ENCODE measurements at regions of chr17 and their contacts with region 1.

Region 1: DNA sequence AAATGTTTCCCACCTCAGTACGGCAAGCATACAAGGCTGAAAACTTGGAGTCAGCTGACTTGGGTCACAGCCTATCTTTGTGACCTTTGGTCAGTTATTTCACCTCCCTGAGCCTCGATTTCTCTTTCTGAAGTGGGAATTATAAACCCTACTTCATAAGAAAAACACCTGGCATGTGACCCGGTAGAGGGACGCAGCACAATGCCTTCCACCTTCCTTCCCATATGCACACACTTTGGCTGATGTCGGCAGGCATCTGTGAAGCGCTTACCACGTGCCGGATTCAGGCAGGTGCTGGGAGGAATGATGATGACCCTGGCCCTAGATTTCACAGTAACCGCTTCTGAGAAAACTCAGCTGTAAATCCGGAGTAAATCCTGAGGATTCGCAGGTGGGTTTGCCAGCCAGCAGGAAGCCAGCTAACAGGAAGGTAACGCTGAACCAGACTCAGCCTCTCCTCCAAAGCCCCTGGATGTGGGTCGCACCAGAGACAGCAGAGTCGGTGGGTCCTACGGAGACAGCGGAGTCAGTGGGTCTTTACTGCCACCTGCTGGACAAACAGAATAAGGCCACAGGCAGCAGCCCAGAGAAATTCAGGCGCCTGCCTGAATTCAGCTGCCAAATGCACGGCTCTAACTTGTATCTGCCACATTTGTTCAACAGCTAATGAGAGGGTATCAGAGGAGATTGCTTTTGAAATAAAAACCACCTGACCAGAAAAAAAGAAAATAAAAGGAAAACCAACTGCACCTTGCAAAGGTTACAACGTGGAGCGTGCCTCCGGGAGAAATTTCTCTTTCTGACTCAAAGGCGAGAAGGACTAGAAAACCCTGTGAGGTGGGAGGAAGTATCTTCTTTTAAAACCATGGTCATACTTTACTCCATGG is 16.6 kb downstream of the COPRS start:
- DNase-seq: peak; percentile 76
- ATAC-seq: peak; percentile 90
- H3K4me3 Mint-ChIP-seq: no peak overlapping the region
- H3K27ac Mint-ChIP-seq: no peak overlapping the region
- H3K4me1 Mint-ChIP-seq: no peaks in the 10 kb centered on the region
- H3K27me3 Mint-ChIP-seq: peaks cover 17% of the 10 kb centered on the region

Region 2: GRCh38 chr17:31533546-31534155 is 308.8 kb before region 1 on chr17:
- CTCF ChIA-PET with region 1: interaction called, 41 read pairs
- POLR2A ChIA-PET with region 1: no interaction called
- DNase-seq: no peak
- ATAC-seq: peak; percentile 20
- H3K4me3 Mint-ChIP-seq: no peak overlapping the region
- H3K27ac Mint-ChIP-seq: no peak overlapping the region
- H3K4me1 Mint-ChIP-seq: peaks cover 17% of the 10 kb centered on the region
- H3K27me3 Mint-ChIP-seq: no peaks in the 10 kb centered on the region

Region 3: DNA sequence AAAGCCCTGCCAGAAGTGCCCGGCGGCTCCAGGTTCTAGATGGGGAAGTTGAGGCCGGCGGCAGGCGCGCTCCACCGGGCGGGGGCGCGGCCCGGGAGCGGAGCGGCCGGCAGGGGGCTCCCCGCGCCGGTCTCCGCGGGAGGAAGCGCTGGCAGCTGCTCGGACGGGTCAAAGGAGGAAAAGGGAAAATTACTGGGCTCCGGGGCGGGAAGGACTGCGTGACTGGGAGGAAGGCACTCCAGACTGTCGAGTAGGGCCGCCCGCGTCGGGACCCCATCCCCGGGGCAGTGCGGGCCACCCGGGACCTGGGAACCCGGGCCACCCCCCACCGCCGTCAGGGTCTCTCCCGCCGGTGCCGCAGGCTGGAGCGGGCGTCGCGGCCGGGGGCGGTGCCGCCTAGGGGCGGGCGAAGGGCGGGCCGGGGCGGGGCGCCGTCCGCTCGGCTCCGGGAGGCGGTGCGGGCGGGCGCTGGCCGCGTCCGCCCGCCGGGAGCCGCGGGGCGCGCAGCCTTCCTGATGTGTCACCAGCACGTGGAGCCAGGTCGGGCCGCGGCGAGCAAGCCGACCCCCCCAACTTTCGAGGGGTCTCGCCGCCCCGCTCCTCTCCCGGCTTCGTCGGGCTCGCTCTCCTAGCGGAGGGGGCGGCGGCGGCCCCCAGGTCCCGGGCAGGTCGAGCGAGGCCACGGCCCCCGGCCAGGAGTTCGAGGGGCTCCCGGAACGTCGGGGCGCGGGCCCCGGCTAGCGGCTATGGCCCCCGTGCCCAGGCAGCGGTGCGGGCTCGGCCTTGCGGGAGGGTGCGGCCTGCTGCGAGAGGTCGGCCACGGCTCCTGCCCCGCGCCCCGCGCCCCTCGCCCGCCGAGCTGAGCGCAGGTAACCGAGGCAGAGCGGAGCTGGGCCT is 283.4 kb before region 1 on chr17:
- CTCF ChIA-PET with region 1: interaction called, 17 read pairs
- POLR2A ChIA-PET with region 1: no interaction called
- DNase-seq: peak; percentile 52
- ATAC-seq: peak; percentile 91
- H3K4me3 Mint-ChIP-seq: peak overlapping the region; percentile 54
- H3K27ac Mint-ChIP-seq: no peak overlapping the region
- H3K4me1 Mint-ChIP-seq: peaks cover 10% of the 10 kb centered on the region
- H3K27me3 Mint-ChIP-seq: peaks cover 22% of the 10 kb centered on the region

Region 4: GRCh38 chr17:31811101-31811500 is 31.3 kb before region 1 on chr17:
- CTCF ChIA-PET with region 1: no interaction called
- POLR2A ChIA-PET with region 1: no interaction called
- DNase-seq: no peak
- ATAC-seq: no peak
- H3K4me3 Mint-ChIP-seq: no peak overlapping the region
- H3K27ac Mint-ChIP-seq: no peak overlapping the region
- H3K4me1 Mint-ChIP-seq: no peaks in the 10 kb centered on the region
- H3K27me3 Mint-ChIP-seq: peaks cover 12% of the 10 kb centered on the region

Region 5: DNA sequence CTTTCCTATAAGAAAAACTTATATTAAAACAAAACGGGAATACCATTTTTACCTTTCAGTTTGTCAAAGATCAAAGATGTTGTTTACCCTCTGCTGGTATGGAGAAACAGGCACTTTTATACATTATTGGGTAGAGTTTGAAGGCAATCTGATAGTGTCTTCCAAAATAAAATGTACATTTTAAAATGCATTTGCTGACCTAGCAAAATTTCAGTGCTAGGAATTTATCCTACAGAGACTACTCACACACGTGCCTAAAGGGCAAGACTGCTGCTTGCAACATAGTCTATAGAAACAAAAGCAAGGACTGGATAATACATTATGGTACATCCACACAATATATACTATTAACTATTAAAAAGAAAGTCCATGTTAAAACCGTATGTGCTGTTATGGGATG is 19.4 kb before region 1 on chr17:
- CTCF ChIA-PET with region 1: no interaction called
- POLR2A ChIA-PET with region 1: no interaction called
- DNase-seq: no peak
- ATAC-seq: no peak
- H3K4me3 Mint-ChIP-seq: no peak overlapping the region
- H3K27ac Mint-ChIP-seq: no peak overlapping the region
- H3K4me1 Mint-ChIP-seq: no peaks in the 10 kb centered on the region
- H3K27me3 Mint-ChIP-seq: peaks cover 16% of the 10 kb centered on the region

Region 6: DNA sequence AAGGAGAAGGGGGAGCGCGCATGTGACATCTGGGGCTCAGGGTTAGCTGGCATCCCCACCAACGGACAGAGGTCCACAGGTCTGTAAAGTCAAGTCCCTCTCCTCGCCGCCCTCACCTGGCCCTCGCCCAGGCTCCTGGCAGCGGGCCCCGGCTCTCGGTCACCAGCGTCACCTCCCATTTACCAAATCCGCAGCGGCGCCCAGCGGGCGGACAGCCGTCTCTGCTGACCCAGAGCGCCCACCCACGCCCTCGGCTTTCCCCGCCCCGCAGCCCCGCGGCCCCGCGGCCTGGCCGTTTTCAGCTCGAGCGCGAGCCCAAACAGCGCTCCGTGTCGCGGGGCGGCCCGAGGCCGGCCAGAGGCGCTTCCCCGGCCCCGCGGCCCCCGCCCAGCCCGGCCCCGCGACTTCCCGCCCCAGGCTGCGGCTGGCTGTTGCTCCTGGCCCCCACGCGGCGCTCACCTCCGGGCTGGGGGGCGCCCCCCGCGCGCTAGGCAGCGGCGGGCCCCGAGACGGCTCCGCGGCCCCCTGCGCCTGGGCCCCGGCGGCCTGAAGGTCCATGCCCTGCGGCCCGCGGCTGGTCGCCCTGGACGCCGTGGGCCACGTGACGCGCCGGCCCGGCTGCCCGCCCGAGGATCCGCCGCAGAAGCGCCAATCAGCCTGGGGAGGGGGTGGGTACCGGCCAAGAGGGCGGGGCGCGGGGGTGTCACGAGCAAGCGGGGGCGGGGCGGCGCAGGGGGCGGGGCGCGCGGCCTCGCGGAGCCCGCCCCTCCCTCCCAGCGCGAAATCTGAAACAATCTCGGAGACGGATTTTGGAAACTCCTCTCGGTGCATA is 16.4 kb after region 1 on chr17 and contains the start of gene COPRS:
- CTCF ChIA-PET with region 1: interaction called, 17 read pairs
- POLR2A ChIA-PET with region 1: no interaction called
- DNase-seq: peak; percentile 85
- ATAC-seq: peak; percentile 92
- H3K4me3 Mint-ChIP-seq: peak within 1 kb of the TSS; percentile 85
- H3K27ac Mint-ChIP-seq: peak within 1 kb of the TSS; percentile 83
- H3K4me1 Mint-ChIP-seq: peaks cover 20% of the 10 kb centered on the region
- H3K27me3 Mint-ChIP-seq: no peaks in the 10 kb centered on the region
- total RNA-seq, gene COPRS: 21.0 to 22.5 TPM

Measured in activated CD8-positive, alpha-beta T cell treated with anti-CD3 and anti-CD28 coated beads, Interleukin-2, amount 10 ng/mL, durations not matched to agents 7 days and 5 days (primary cell).